ENCODE measurements at regions of chr10 and their contacts with region 1.

Region 1: DNA sequence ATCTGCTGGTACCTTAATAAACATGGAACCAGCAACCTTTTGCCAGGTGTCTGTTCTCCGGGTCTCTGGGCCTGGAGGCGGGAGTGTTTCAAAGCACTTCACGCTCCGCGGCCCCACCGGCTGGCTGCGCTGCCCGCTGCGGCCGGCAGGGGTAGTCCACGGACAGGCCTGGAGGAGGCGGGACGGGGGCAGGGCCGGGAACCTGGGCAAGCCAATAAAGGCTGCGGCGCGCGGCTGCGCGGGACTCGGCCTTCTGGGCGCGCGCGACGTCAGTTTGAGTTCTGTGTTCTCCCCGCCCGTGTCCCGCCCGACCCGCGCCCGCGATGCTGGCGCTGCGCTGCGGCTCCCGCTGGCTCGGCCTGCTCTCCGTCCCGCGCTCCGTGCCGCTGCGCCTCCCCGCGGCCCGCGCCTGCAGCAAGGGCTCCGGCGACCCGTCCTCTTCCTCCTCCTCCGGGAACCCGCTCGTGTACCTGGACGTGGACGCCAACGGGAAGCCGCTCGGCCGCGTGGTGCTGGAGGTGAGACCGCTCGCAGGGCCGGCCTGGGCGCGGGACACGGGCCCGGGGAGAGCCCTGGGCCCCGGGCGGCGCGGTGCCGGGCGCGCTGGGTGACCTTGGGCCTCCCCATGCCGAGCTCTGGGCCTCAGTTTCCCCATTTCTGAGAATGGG is at the start of gene PPIF:
- DNase-seq: peak; percentile 88 to 92
- ATAC-seq: peak; percentile 85 to 89
- H3K4me3 ChIP-seq: peak within 1 kb of the TSS; percentile 58 to 87 (median 72)
- H3K27ac ChIP-seq: peak within 1 kb of the TSS; percentile 90 to 97 (median 93)
- H3K4me1 ChIP-seq: peaks cover 13 to 18% of the 10 kb centered on the region in 2 donors
- H3K27me3 ChIP-seq: no peaks in the 10 kb centered on the region
- CTCF ChIP-seq: peak; percentile 96 to 99 (median 98)
- POLR2A ChIP-seq: peak; percentile 94
- total RNA-seq, gene PPIF: 39.1 to 82.1 (median 67.9) TPM

Region 2: GRCh38 chr10:79286318-79286951 is 60.9 kb before region 1 on chr10:
- in situ Hi-C with region 1: no loop called
- intact Hi-C with region 1: no loop called
- DNase-seq: no peak
- ATAC-seq: peak in 1 of 2 donors; percentile 9
- H3K4me3 ChIP-seq: no peak overlapping the region
- H3K27ac ChIP-seq: peak overlapping the region in 1 of 4 donors; percentile 46
- H3K4me1 ChIP-seq: peaks cover 0 to 15% of the 10 kb centered on the region in 2 donors
- H3K27me3 ChIP-seq: no peaks in the 10 kb centered on the region
- CTCF ChIP-seq: no peak
- POLR2A ChIP-seq: no peak

Region 3: GRCh38 chr10:79394664-79395063 is 47.3 kb after region 1 on chr10:
- in situ Hi-C with region 1: no loop called
- intact Hi-C with region 1: loop called (anchors 1 kb)
- DNase-seq: no peak
- ATAC-seq: no peak
- H3K4me3 ChIP-seq: no peak overlapping the region
- H3K27ac ChIP-seq: peak overlapping the region in 1 of 4 donors; percentile 33
- H3K4me1 ChIP-seq: peaks cover 43 to 48% of the 10 kb centered on the region in 2 donors
- H3K27me3 ChIP-seq: no peaks in the 10 kb centered on the region
- CTCF ChIP-seq: no peak
- POLR2A ChIP-seq: no peak

Region 4: DNA sequence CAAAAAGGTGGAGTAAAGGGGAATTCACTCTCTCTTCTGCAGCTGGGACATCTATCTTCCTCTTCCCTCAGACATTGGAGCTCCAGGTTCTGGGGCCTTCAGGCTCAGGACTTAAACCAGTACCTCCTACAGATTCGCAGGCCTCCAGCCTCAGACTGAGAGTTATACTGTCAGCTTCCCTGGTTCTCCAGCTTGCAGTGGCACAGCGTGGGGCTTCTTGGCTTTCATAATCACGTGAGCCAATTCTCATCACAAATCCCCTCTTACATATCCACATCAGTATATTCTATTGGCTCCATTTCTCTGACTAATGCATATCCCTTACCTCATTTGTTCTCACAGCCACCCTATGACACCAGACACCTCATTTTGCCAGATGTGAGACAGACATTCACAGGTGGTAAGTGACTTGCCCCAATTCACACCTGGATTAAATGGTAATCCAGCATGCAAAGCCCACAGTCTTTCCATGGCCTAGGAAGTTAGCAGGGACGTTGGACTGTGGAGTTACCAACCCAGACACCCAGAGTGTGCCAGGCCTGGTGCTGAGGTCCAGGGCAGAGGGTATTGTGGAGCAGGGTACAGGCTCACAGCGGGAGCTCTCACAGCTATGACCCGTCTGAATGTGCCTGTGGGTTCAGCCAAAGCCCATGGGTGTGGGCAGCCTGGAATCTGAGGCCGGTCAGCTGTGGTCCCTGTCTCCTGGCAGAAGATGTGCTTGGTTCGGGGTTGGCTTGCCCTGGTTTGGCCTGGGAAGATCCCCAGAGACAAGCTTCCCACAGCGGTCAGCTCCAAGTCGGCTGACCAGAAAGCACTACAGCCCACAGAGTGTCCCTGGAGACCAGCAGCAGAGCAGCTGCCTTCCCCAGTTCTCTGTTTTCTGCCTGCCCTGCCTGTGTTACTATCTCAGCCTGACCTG is 116.5 kb after region 1 on chr10:
- in situ Hi-C with region 1: no loop called
- intact Hi-C with region 1: loop called (anchors 1 kb)
- DNase-seq: peak; percentile 77 to 91
- ATAC-seq: peak; percentile 77 to 86
- H3K4me3 ChIP-seq: no peak overlapping the region
- H3K27ac ChIP-seq: peak overlapping the region; percentile 64 to 85 (median 77)
- H3K4me1 ChIP-seq: peaks cover 30 to 42% of the 10 kb centered on the region in 2 donors
- H3K27me3 ChIP-seq: no peaks in the 10 kb centered on the region
- CTCF ChIP-seq: no peak
- POLR2A ChIP-seq: no peak

Region 5: GRCh38 chr10:79542626-79543025 is 195.3 kb after region 1 on chr10:
- in situ Hi-C with region 1: no loop called
- intact Hi-C with region 1: no loop called
- DNase-seq: no peak
- ATAC-seq: no peak
- H3K4me3 ChIP-seq: no peak overlapping the region
- H3K27ac ChIP-seq: no peak overlapping the region
- H3K4me1 ChIP-seq: no peaks in the 10 kb centered on the region
- H3K27me3 ChIP-seq: no peaks in the 10 kb centered on the region
- CTCF ChIP-seq: no peak
- POLR2A ChIP-seq: no peak